CD8-positive, alpha-beta memory T cell (primary cell): ENCODE measurements at regions of chr7 and their contacts with region 1.

Region 1: DNA sequence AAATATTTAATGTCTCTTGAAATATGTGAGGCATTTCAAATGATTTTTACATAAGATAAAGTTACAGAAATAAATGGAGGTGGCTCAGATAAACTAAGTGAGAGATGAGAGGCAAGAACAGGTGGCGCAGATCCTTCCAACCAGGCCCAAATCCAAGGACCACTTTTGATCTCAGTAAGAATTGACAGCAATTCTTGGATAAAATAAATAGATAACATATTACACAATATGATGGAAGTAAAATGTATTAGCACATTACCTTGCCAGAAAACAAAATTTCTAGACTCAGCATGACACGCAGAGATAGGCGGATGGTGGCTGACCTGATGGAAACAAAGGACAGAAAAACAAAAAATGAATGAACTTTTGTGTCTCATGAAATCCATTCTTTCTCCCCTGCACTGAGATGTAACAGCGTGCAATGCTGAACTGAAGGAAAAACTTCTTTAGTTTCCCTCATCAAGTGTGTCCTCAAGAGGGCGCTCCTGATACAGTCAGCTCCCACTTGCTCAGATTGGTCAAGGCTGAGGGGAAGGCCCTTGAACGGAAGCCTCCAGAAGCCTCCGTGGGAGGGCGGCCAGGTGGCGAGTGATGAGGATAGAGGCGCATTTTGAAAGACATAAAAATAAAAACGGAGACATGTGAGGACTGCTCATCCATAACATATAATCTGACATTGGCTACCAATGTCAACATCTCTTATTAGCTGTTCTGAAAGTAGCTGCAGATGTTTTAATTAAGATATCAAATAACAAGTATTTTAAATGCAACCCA is 62.8 kb upstream of the GSDME start:
- DNase-seq: peak; percentile 58 to 80 (median 67)
- H3K4me3 ChIP-seq: peak overlapping the region; percentile 37
- H3K4me3 Mint-ChIP-seq: peak overlapping the region; percentile 44 to 88 (median 84)
- H3K27ac ChIP-seq: peak overlapping the region; percentile 74
- H3K27ac Mint-ChIP-seq: peak overlapping the region; percentile 93 to 98 (median 96)
- H3K4me1 ChIP-seq: peaks cover 27% of the 10 kb centered on the region
- H3K4me1 Mint-ChIP-seq: peaks cover 45 to 57% (median 56%) of the 10 kb centered on the region in 3 donors
- H3K27me3 ChIP-seq: no peaks in the 10 kb centered on the region
- H3K27me3 Mint-ChIP-seq: no peaks in the 10 kb centered on the region

Region 2: DNA sequence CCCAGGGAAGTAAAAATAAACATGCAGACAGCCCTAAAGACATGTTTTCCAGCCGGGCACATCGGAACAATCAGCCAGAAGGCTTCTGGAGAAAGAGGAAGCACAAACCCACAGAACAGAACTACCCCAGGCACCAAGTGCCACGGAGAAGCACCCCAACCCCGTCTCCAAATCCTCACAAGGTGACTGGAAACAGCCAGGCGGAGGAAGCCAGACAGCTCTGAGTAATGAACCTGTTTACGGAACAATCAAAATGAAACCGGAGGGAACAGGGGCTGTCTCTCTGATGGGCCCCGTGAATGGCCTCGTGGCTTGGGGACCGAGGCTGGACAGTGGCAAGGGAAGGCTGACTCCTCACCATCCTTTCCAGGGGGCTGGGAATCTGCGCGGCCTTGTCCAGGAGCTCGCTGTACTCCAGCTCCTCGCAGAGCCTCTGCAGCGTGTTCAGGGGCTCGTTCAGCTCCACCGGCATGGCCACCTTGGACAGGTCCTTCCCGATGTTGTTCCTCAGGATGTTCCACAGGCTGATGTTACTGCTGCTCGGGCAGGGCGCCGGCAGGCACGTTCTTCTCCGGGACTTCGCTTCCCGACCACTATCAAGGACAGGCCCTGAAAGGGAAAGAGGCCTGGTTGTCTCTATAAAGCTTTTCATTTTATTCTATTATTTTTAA is 14.2 kb after region 1 on chr7:
- CTCF ChIA-PET with region 1: interaction called, 13 read pairs
- POLR2A ChIA-PET with region 1: no interaction called
- DNase-seq: no peak
- H3K4me3 ChIP-seq: no peak overlapping the region
- H3K4me3 Mint-ChIP-seq: no peak overlapping the region
- H3K27ac ChIP-seq: no peak overlapping the region
- H3K27ac Mint-ChIP-seq: peak overlapping the region in 3 of 8 donors; percentile 57 to 82 (median 59)
- H3K4me1 ChIP-seq: peaks cover 20% of the 10 kb centered on the region
- H3K4me1 Mint-ChIP-seq: peaks cover 26 to 37% (median 36%) of the 10 kb centered on the region in 3 donors
- H3K27me3 ChIP-seq: no peaks in the 10 kb centered on the region
- H3K27me3 Mint-ChIP-seq: no peaks in the 10 kb centered on the region

Region 3: DNA sequence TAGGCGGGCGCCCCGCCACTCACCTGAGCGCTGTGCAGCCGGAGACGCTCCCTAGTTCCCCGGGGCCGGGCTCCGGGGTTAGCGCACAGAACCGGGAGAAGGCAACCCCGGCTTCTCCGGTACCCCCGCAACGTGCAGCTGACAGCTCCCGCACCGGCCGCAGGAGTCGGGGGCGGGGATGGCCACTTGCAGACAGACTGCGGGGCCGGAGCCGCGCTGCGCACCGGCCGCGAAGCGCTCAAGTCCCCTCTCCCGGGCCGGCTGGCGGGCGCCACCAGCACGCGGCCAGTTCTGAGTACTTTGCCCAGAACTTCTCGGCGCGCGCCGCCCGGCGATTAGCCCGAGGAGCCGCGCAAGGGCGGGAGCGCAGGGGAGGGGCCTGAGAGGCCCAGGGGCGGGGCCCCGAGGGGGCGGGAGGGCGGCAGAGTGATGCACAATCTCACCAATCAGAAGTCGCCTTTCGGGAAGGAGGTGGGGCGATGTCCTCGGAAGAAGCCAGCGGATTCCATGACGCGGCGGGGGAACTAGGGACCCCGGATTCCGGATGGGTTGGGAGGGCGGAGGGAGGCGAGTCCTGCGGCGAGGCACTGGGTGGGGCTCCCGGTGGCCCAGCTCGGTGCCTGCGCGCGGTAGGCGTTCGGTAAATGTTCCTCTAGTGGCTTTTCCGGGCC is 159.9 kb after region 1 on chr7 and contains the start of gene OSBPL3:
- CTCF ChIA-PET with region 1: interaction called, 86 read pairs
- POLR2A ChIA-PET with region 1: interaction called, 51 read pairs
- DNase-seq: peak; percentile 92 to 98 (median 97)
- H3K4me3 ChIP-seq: peak within 1 kb of the TSS; percentile 96
- H3K4me3 Mint-ChIP-seq: peak within 1 kb of the TSS; percentile 87 to 99 (median 97)
- H3K27ac ChIP-seq: peak within 1 kb of the TSS; percentile 87
- H3K27ac Mint-ChIP-seq: peak within 1 kb of the TSS; percentile 79 to 99 (median 95)
- H3K4me1 ChIP-seq: peaks cover 45% of the 10 kb centered on the region
- H3K4me1 Mint-ChIP-seq: peaks cover 51 to 64% (median 64%) of the 10 kb centered on the region in 3 donors
- H3K27me3 ChIP-seq: no peaks in the 10 kb centered on the region
- H3K27me3 Mint-ChIP-seq: no peaks in the 10 kb centered on the region
- total RNA-seq, gene OSBPL3: 71.7 to 72.5 TPM

Region 4: GRCh38 chr7:25069900-25070443 is 249.9 kb after region 1 on chr7:
- CTCF ChIA-PET with region 1: interaction called, 47 read pairs
- POLR2A ChIA-PET with region 1: interaction called, 18 read pairs
- DNase-seq: peak; percentile 12 to 60 (median 49)
- H3K4me3 ChIP-seq: no peak overlapping the region
- H3K4me3 Mint-ChIP-seq: no peak overlapping the region
- H3K27ac ChIP-seq: no peak overlapping the region
- H3K27ac Mint-ChIP-seq: no peak overlapping the region
- H3K4me1 ChIP-seq: no peaks in the 10 kb centered on the region
- H3K4me1 Mint-ChIP-seq: peaks cover 2 to 11% (median 9%) of the 10 kb centered on the region in 3 donors
- H3K27me3 ChIP-seq: no peaks in the 10 kb centered on the region
- H3K27me3 Mint-ChIP-seq: no peaks in the 10 kb centered on the region

Region 5: DNA sequence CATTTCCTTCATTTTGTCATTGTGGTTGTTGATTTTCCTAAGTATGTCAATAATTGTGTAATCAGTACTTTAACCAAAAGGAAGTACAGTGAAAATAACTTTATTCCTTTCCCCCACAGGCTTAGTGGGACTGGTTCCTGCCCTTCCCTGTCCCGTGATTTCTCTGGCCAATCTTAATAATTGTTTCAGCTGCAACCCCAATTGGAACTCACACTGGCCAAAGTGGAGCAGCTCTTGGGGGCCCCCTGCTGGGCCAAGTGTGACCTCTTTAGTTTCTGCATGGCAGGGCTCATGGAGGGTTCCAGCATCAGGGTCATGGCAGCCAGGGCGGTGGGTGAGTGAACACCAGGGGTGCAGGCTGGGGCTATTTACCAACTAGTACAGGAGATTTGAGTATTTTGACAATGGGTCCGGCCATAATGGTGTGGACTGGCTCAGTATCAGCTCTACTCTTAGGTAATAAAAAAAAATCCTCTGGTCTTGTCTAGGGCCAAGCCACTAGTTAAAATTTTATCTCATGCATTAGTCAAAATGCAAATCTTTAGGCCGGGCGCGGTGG is 273.2 kb after region 1 on chr7:
- CTCF ChIA-PET with region 1: interaction called, 209 read pairs
- POLR2A ChIA-PET with region 1: no interaction called
- DNase-seq: peak; percentile 57 to 78 (median 62)
- H3K4me3 ChIP-seq: no peak overlapping the region
- H3K4me3 Mint-ChIP-seq: no peak overlapping the region
- H3K27ac ChIP-seq: no peak overlapping the region
- H3K27ac Mint-ChIP-seq: no peak overlapping the region
- H3K4me1 ChIP-seq: no peaks in the 10 kb centered on the region
- H3K4me1 Mint-ChIP-seq: peaks cover 6 to 11% (median 8%) of the 10 kb centered on the region in 3 donors
- H3K27me3 ChIP-seq: no peaks in the 10 kb centered on the region
- H3K27me3 Mint-ChIP-seq: peaks cover 1 to 2% of the 10 kb centered on the region in 2 donors